Thyroid gland (tissue), 4 donors: ENCODE measurements at regions of chr2 and their contacts with region 1.

Region 1: GRCh38 chr2:101252408-101253012 is at the start of gene CNOT11:
- DNase-seq: peak; percentile 99
- H3K4me3 ChIP-seq: peak within 1 kb of the TSS; percentile 43 to 100 (median 98)
- H3K27ac ChIP-seq: peak within 1 kb of the TSS; percentile 67 to 96 (median 92)
- H3K4me1 ChIP-seq: peaks cover 19 to 24% of the 10 kb centered on the region in 2 donors
- H3K27me3 ChIP-seq: no peaks in the 10 kb centered on the region
- CTCF ChIP-seq: peak in 2 of 6 experiments; percentile 7 to 12
- POLR2A ChIP-seq: peak in 1 of 2 donors; percentile 75
- total RNA-seq, gene CNOT11: 27.5 to 41.6 (median 37.4) TPM

Region 2: DNA sequence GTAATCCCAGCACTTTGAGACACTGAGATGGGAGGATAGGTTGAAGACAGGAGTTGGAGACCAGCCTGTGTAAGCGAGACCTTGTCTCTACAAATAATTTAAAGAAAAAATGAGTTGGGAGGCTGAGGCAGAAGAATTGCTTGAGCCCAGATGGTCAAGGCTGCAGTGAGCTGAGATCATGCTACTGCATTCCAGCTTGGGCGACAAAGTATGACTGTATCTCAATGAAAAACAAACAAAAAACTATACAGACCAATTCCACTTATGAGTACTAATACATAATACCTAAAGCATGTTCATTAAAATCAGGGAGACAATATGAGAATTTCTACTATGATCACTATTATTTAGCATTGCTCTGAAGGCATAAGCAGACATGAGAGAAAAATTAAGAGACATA is 43.4 kb after region 1 on chr2:
- intact Hi-C with region 1: no loop called
- DNase-seq: no peak
- H3K4me3 ChIP-seq: no peak overlapping the region
- H3K27ac ChIP-seq: no peak overlapping the region
- H3K4me1 ChIP-seq: peaks cover 0 to 16% of the 10 kb centered on the region in 2 donors
- H3K27me3 ChIP-seq: no peaks in the 10 kb centered on the region
- CTCF ChIP-seq: no peak
- POLR2A ChIP-seq: no peak

Region 3: GRCh38 chr2:101308432-101309210 is 56.1 kb after region 1 on chr2 and contains the start of gene RNF149:
- intact Hi-C with region 1: loop called (anchors 5 kb)
- DNase-seq: peak; percentile 88 to 91
- H3K4me3 ChIP-seq: peak within 1 kb of the TSS; percentile 62 to 96 (median 68)
- H3K27ac ChIP-seq: peak within 1 kb of the TSS; percentile 79 to 84 (median 81)
- H3K4me1 ChIP-seq: peaks cover 18 to 25% of the 10 kb centered on the region in 2 donors
- H3K27me3 ChIP-seq: no peaks in the 10 kb centered on the region
- CTCF ChIP-seq: peak in 2 of 6 experiments; percentile 29 to 32
- POLR2A ChIP-seq: peak; percentile 69 to 95
- total RNA-seq, gene RNF149: 49.5 to 95.6 (median 68.5) TPM